Naive thymus-derived CD4-positive, alpha-beta T cell (primary cell): ENCODE measurements at regions of chr4 and their contacts with region 1.

Region 1: DNA sequence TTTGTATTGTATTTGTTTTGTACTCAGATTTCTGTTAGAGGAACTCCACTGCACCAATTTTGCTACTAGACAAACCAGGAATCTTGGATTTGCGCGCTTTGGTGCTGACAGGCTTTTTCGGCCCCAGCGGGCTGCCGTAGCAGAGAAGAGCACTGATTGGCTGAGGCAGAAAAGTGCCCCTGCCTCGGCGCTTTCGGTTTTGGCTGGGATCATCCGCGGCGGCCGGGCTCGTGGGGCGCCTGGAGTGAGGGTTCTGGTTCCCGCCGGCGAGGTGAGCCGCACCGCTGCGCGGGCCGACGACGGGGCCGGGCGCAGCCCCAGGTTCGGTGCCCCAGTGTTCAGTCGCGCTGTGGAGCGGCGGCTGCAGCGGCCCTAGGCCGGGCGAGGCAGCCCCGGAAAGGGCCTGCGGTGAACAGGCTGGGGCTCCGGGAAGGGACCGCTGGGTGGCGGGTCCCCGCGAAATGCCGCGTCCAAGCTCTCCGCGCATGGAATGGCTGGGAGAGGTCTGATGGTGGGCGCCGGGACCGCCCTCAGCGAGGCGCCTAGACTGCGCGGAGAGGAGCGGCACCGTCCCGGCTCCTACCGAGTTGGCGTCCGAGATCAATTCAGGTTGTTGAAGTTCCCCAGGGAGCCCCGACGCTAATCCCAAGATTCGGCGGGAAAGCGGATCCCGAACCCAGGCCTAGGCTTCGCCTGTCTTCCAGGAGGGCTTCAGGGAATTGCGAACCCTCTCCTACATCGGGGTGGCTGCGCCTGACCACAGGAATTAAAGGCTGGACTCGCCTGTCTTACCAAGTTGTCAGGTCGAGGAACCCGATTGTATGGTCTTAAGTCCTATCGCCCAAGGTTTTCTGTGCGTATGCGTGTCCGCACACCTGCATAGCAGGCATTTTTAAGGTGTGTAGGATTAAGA is at the start of gene LSM6:
- DNase-seq: peak; percentile 63 to 86 (median 84)
- ATAC-seq: peak; percentile 94
- H3K4me3 ChIP-seq: peak within 1 kb of the TSS; percentile 87
- H3K4me3 Mint-ChIP-seq: peak within 1 kb of the TSS; percentile 88 to 95 (median 92)
- H3K27ac ChIP-seq: peak within 1 kb of the TSS; percentile 94
- H3K27ac Mint-ChIP-seq: peak within 1 kb of the TSS; percentile 82 to 99 (median 97)
- H3K4me1 ChIP-seq: peaks cover 25 to 31% of the 10 kb centered on the region in 2 donors
- H3K4me1 Mint-ChIP-seq: peaks cover 29 to 66% (median 57%) of the 10 kb centered on the region in 7 donors
- H3K27me3 ChIP-seq: no peaks in the 10 kb centered on the region
- H3K27me3 Mint-ChIP-seq: no peaks in the 10 kb centered on the region
- total RNA-seq, gene LSM6: 24.7 to 49.7 (median 46.2) TPM

Region 2: GRCh38 chr4:146243141-146243882 is 67.5 kb after region 1 on chr4:
- CTCF ChIA-PET with region 1: no interaction called
- POLR2A ChIA-PET with region 1: no interaction called
- intact Hi-C with region 1: loop called in 1 of 2 experiments (anchors 1 kb)
- DNase-seq: peak in 8 of 9 donors; percentile 10 to 76 (median 31)
- ATAC-seq: peak; percentile 59
- H3K4me3 ChIP-seq: peak overlapping the region; percentile 3
- H3K4me3 Mint-ChIP-seq: peak overlapping the region; percentile 36 to 72 (median 60)
- H3K27ac ChIP-seq: no peak overlapping the region
- H3K27ac Mint-ChIP-seq: peak overlapping the region in 1 of 9 donors; percentile 32
- H3K4me1 ChIP-seq: peaks cover 0 to 10% of the 10 kb centered on the region in 2 donors
- H3K4me1 Mint-ChIP-seq: peaks cover 4 to 15% (median 13%) of the 10 kb centered on the region in 7 donors
- H3K27me3 ChIP-seq: no peaks in the 10 kb centered on the region
- H3K27me3 Mint-ChIP-seq: peaks cover 0 to 9% (median under 1%) of the 10 kb centered on the region in 5 donors

Region 3: DNA sequence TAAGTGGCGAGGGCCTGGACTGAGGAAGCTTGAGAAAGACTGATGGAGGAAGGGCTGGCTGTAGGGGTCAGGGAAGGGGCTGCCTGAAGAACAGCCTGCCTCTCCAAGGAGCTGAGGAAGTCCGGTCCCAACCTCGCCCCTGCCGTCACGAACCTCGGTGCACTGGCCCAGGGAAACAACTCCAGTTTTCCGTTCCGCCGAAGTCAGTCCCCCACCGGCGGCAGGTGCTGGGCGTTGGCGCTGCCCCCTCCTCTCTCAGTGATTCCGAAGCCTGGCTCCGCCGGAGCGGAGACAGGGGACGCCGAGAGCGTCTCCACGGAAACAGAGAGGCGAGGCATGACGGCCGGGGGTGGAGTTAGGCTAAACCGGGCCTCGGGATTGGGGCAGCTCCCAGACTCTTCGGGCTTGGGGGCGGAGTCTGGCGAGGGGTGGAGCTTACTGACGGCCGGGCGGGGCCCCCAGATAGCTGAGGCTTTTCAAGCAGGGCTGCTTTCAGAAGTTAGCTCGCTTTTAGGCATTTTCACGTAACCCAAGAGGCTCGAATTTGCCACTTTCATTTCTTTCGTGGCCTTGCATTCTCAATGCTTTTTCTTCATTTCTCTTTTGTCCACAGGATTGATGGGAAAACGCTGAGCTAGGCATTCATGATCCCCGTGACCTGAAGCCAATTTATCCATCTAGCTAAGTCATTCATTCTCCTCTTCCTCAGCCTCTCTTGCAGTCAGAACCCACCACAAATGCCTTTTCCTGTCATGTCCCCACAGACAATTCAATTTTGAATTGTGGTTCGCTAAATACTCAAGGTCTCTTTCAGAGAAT is 770.0 kb after region 1 on chr4 and contains the start of gene TTC29:
- CTCF ChIA-PET with region 1: no interaction called
- POLR2A ChIA-PET with region 1: no interaction called
- intact Hi-C with region 1: loop called (anchors 10 kb)
- DNase-seq: peak; percentile 63 to 86 (median 82)
- ATAC-seq: peak; percentile 99
- H3K4me3 ChIP-seq: peak within 1 kb of the TSS; percentile 52
- H3K4me3 Mint-ChIP-seq: peak within 1 kb of the TSS; percentile 78 to 96 (median 85)
- H3K27ac ChIP-seq: no peak within 1 kb of the TSS
- H3K27ac Mint-ChIP-seq: peak within 1 kb of the TSS in 7 of 9 donors; percentile 28 to 79 (median 59)
- H3K4me1 ChIP-seq: peaks cover 15 to 18% of the 10 kb centered on the region in 2 donors
- H3K4me1 Mint-ChIP-seq: peaks cover 9 to 38% (median 32%) of the 10 kb centered on the region in 7 donors
- H3K27me3 ChIP-seq: no peaks in the 10 kb centered on the region
- H3K27me3 Mint-ChIP-seq: peaks cover 7 to 64% (median 18%) of the 10 kb centered on the region in 5 donors
- total RNA-seq, gene TTC29: not detected